ENCODE measurements at regions of chr5 and their contacts with region 1.

Region 1: DNA sequence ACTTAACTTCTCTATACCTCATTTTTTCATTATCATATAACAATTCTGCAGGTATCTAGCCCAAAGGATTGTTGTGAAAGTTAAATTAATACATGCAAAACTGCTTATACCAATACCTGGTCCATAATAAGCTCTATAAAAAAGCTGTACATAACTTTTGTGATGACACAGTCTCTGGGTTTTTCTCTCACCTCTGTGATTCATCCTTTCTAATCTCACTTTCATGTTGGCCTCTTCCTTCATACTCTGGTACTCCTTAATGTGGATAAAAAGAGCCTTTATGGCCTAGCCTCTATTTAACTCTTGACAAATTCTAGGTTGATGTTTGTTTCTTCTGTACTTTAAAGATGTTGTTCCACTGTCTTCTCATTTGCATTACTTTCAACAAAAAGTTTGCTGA is 162.9 kb upstream of the ACOT12 start:
- DNase-seq: no peak
- ATAC-seq: no peak
- H3K4me3 ChIP-seq: no peak overlapping the region
- H3K27ac ChIP-seq: no peak overlapping the region
- H3K4me1 ChIP-seq: no peaks in the 10 kb centered on the region
- H3K27me3 ChIP-seq: no peaks in the 10 kb centered on the region
- CTCF ChIP-seq: no peak
- EP300 ChIP-seq: no peak
- POLR2A ChIP-seq: no peak
- RAD21 ChIP-seq: no peak

Region 2: GRCh38 chr5:81345411-81346003 is 211.3 kb before region 1 on chr5:
- CTCF ChIA-PET with region 1: no interaction called
- POLR2A ChIA-PET with region 1: no interaction called
- in situ Hi-C with region 1: no loop called
- intact Hi-C with region 1: no loop called
- DNase-seq: no peak
- ATAC-seq: no peak
- H3K4me3 ChIP-seq: no peak overlapping the region
- H3K27ac ChIP-seq: no peak overlapping the region
- H3K4me1 ChIP-seq: peaks cover 7% of the 10 kb centered on the region
- H3K27me3 ChIP-seq: no peaks in the 10 kb centered on the region
- CTCF ChIP-seq: no peak
- EP300 ChIP-seq: no peak
- POLR2A ChIP-seq: no peak
- RAD21 ChIP-seq: no peak

Region 3: DNA sequence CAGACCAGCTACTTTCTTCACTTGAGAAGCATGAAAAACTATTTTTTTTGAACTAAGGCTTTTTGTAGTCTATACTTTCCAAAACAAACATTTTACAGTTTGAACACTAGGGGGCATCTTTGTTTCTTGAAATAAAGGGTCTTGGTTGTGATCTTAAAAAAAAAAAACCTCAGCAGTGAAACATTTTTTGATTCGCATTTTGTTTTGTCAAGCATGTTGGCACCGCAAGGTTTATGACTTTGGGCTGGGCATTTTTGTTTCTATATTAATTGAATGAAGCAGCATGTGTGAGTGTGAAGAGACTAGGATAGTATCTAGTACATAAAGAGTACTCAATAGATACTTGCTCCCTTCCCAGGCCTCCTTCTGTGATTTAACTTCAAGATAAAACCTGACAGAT is 131.2 kb before region 1 on chr5:
- CTCF ChIA-PET with region 1: no interaction called
- POLR2A ChIA-PET with region 1: no interaction called
- in situ Hi-C with region 1: no loop called
- intact Hi-C with region 1: no loop called
- DNase-seq: peak; percentile 32
- ATAC-seq: peak; percentile 53; the same call in 2 of the 3 replicates
- H3K4me3 ChIP-seq: no peak overlapping the region
- H3K27ac ChIP-seq: no peak overlapping the region
- H3K4me1 ChIP-seq: peaks cover 13% of the 10 kb centered on the region; the same call in 1 of the 2 replicates
- H3K27me3 ChIP-seq: no peaks in the 10 kb centered on the region
- CTCF ChIP-seq: peak; percentile 44
- EP300 ChIP-seq: no peak
- POLR2A ChIP-seq: no peak
- RAD21 ChIP-seq: 0 out of 2 replicates have a peak, but pooled peaks have one; percentile 26

Region 4: GRCh38 chr5:81544351-81545018 is 12.3 kb before region 1 on chr5:
- CTCF ChIA-PET with region 1: no interaction called
- POLR2A ChIA-PET with region 1: no interaction called
- in situ Hi-C with region 1: no loop called
- intact Hi-C with region 1: loop called (anchors 1 kb)
- DNase-seq: no peak
- ATAC-seq: no peak
- H3K4me3 ChIP-seq: no peak overlapping the region
- H3K27ac ChIP-seq: no peak overlapping the region
- H3K4me1 ChIP-seq: no peaks in the 10 kb centered on the region
- H3K27me3 ChIP-seq: no peaks in the 10 kb centered on the region
- CTCF ChIP-seq: no peak
- EP300 ChIP-seq: no peak
- POLR2A ChIP-seq: no peak
- RAD21 ChIP-seq: no peak